Endothelial cell of umbilical vein (primary cell): ENCODE measurements at regions of chr4 and their contacts with region 1.

Region 1: DNA sequence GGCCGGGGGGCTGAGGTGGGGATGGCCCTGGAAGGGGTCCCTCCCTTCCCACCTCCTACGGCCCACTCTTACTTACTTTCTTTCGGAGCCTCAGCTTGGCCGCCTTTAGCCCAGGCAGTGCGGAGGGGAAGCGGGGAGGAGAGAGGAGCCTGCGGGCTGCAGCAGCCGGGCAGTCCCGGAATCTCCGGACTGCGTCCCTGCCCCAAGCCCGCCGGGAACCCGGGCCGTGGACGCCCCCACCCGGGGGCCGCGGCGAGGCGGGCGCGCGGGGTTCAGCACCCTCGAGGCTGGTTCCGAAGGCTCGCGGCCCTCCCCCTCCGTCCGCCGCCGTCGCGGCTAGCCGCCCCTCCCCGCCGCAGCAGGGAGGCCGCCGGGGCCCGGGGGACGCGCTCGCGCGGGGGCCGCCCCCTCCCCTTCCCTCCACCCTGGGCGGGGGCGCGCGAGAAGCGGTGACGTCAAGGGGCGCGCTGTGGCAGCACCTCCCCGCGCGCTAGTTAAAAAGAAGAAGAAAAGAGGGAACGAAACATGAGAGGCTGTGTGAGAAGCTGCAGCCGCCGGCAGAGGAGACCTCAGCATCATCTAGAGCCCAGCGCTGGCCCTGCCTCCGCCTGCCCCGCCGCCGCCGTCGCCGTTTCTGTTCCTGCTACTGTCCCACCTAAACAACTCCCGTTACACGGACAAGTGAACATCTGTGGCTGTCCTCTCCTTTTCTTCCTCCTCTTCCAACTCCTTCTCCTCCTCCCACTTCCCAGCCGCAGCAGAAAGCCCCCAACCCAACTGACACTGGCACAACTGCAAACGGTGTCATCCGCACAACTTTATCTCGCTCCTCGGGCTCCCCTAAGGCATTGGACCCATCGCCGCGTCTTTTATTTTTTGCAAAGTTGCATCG is at the start of gene HHIP:
- DNase-seq: peak; percentile 88
- H3K4me3 ChIP-seq: peak within 1 kb of the TSS; percentile 62 to 100 (median 100)
- H3K27ac ChIP-seq: peak within 1 kb of the TSS; percentile 95
- H3K4me1 ChIP-seq: peaks cover 32% of the 10 kb centered on the region
- H3K27me3 ChIP-seq: no peaks in the 10 kb centered on the region
- CTCF ChIP-seq: no peak
- POLR2A ChIP-seq: peak; percentile 98
- total RNA-seq, gene HHIP: 971 and 1,052 TPM in 2 replicates

Region 2: GRCh38 chr4:144174401-144175067 is 471.3 kb before region 1 on chr4:
- CTCF ChIA-PET with region 1: interaction called, 5 read pairs
- POLR2A ChIA-PET with region 1: no interaction called
- dilution Hi-C with region 1: no loop called
- intact Hi-C with region 1: loop called (anchors 1 kb)
- DNase-seq: peak; percentile 77
- H3K4me3 ChIP-seq: no peak overlapping the region
- H3K27ac ChIP-seq: no peak overlapping the region
- H3K4me1 ChIP-seq: peaks cover 15% of the 10 kb centered on the region
- H3K27me3 ChIP-seq: no peaks in the 10 kb centered on the region
- CTCF ChIP-seq: peak; percentile 8 to 12
- POLR2A ChIP-seq: no peak

Region 3: GRCh38 chr4:144288011-144288903 is 357.6 kb before region 1 on chr4:
- CTCF ChIA-PET with region 1: no interaction called
- POLR2A ChIA-PET with region 1: no interaction called
- dilution Hi-C with region 1: no loop called
- intact Hi-C with region 1: no loop called
- DNase-seq: no peak
- H3K4me3 ChIP-seq: no peak overlapping the region
- H3K27ac ChIP-seq: no peak overlapping the region
- H3K4me1 ChIP-seq: peaks cover 17% of the 10 kb centered on the region
- H3K27me3 ChIP-seq: no peaks in the 10 kb centered on the region
- CTCF ChIP-seq: no peak
- POLR2A ChIP-seq: no peak

Region 4: GRCh38 chr4:144480068-144480467 is 165.8 kb before region 1 on chr4:
- CTCF ChIA-PET with region 1: no interaction called
- POLR2A ChIA-PET with region 1: no interaction called
- dilution Hi-C with region 1: no loop called
- intact Hi-C with region 1: no loop called
- DNase-seq: no peak
- H3K4me3 ChIP-seq: no peak overlapping the region
- H3K27ac ChIP-seq: no peak overlapping the region
- H3K4me1 ChIP-seq: no peaks in the 10 kb centered on the region
- H3K27me3 ChIP-seq: no peaks in the 10 kb centered on the region
- CTCF ChIP-seq: no peak
- POLR2A ChIP-seq: no peak

Region 5: DNA sequence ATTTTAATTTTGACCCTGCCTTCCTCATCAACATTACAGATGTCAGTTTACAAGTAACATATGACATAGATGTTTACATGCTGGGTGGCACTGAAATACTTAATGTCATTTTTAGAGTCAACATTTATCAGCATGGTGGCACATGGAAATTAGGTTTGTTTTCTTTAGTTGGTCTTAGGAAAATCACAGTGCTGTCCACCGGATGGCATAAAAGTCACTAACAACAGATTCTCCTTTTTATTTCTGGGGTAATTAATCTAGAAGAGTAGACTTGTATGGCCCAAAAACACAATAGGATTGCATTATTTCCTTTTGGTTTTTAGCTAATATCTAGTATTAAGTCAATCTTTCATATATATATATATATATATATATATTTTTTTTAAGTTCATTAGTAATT is 88.5 kb before region 1 on chr4:
- CTCF ChIA-PET with region 1: interaction called, 3 read pairs
- POLR2A ChIA-PET with region 1: no interaction called
- dilution Hi-C with region 1: no loop called
- intact Hi-C with region 1: loop called (anchors 2 kb)
- DNase-seq: peak; percentile 47
- H3K4me3 ChIP-seq: no peak overlapping the region
- H3K27ac ChIP-seq: no peak overlapping the region
- H3K4me1 ChIP-seq: peaks cover 4% of the 10 kb centered on the region
- H3K27me3 ChIP-seq: no peaks in the 10 kb centered on the region
- CTCF ChIP-seq: no peak
- POLR2A ChIP-seq: no peak

Region 6: GRCh38 chr4:144591401-144591800 is 54.5 kb before region 1 on chr4:
- CTCF ChIA-PET with region 1: no interaction called
- POLR2A ChIA-PET with region 1: interaction called, 10 read pairs
- dilution Hi-C with region 1: no loop called
- intact Hi-C with region 1: no loop called
- DNase-seq: peak; percentile 86
- H3K4me3 ChIP-seq: no peak overlapping the region
- H3K27ac ChIP-seq: peak overlapping the region; percentile 59
- H3K4me1 ChIP-seq: peaks cover 39% of the 10 kb centered on the region
- H3K27me3 ChIP-seq: no peaks in the 10 kb centered on the region
- CTCF ChIP-seq: no peak
- POLR2A ChIP-seq: no peak

Region 7: DNA sequence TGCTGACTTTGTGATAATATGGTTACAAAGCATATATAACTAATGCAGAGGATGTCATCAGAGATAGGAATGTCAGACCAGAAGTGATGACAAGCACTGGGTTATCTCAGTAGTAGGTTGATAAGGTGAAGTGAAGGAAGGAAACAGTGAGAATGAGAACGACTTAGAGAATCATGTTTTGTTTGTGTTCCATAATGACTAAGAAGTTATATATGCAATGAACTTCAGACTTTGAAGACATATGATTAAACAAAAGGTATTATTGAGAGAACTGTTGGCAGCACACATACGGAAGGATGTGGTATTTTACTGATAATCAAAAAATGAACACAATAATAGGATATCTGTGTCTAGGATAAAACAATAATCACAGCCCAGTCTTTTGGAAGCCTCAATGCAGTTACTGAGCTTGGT is 18.2 kb before region 1 on chr4:
- CTCF ChIA-PET with region 1: interaction called, 9 read pairs
- POLR2A ChIA-PET with region 1: interaction called, 12 read pairs
- dilution Hi-C with region 1: no loop called
- intact Hi-C with region 1: loop called (anchors 1 kb)
- DNase-seq: peak; percentile 96
- H3K4me3 ChIP-seq: no peak overlapping the region
- H3K27ac ChIP-seq: peak overlapping the region; percentile 99
- H3K4me1 ChIP-seq: peaks cover 36% of the 10 kb centered on the region
- H3K27me3 ChIP-seq: no peaks in the 10 kb centered on the region
- CTCF ChIP-seq: no peak
- POLR2A ChIP-seq: peak; percentile 83

Region 8: GRCh38 chr4:144709793-144710525 is 64.1 kb after region 1 on chr4:
- CTCF ChIA-PET with region 1: interaction called, 3 read pairs
- POLR2A ChIA-PET with region 1: no interaction called
- dilution Hi-C with region 1: no loop called
- intact Hi-C with region 1: loop called (anchors 2 kb)
- DNase-seq: peak; percentile 89
- H3K4me3 ChIP-seq: no peak overlapping the region
- H3K27ac ChIP-seq: peak overlapping the region; percentile 91
- H3K4me1 ChIP-seq: peaks cover 66% of the 10 kb centered on the region
- H3K27me3 ChIP-seq: no peaks in the 10 kb centered on the region
- CTCF ChIP-seq: no peak
- POLR2A ChIP-seq: peak; percentile 41

Region 9: DNA sequence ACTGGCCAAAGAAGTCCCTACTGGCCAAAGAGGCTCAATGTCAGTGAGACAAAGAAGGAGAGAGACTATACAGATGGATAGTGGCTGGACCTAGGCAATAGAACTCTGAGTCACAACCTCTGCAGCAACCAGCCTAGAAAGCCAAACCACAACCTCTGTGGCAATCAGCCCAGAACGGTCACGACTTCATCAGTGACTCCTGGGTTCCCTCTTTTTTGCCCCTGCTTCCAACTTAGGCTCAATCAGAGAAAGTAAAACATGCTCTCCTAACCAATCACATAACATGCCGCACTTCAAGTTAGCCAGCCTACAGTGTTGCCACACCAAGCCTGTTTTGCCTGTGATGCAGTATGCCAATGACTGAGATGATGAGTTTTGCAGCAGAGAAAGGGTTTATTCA is 248.7 kb after region 1 on chr4:
- CTCF ChIA-PET with region 1: no interaction called
- POLR2A ChIA-PET with region 1: no interaction called
- dilution Hi-C with region 1: no loop called
- intact Hi-C with region 1: no loop called
- DNase-seq: no peak
- H3K4me3 ChIP-seq: no peak overlapping the region
- H3K27ac ChIP-seq: no peak overlapping the region
- H3K4me1 ChIP-seq: no peaks in the 10 kb centered on the region
- H3K27me3 ChIP-seq: no peaks in the 10 kb centered on the region
- CTCF ChIP-seq: no peak
- POLR2A ChIP-seq: no peak

Region 10: GRCh38 chr4:145097821-145098674 is 452.2 kb after region 1 on chr4 and contains the starts of genes ABCE1 and ANAPC10:
- CTCF ChIA-PET with region 1: interaction called, 3 read pairs
- POLR2A ChIA-PET with region 1: no interaction called
- dilution Hi-C with region 1: no loop called
- intact Hi-C with region 1: loop called (anchors 5 kb)
- DNase-seq: peak; percentile 98
- H3K4me3 ChIP-seq: peak within 1 kb of the TSS; percentile 45 to 95 (median 66)
- H3K27ac ChIP-seq: peak within 1 kb of the TSS; percentile 74
- H3K4me1 ChIP-seq: peaks cover 35% of the 10 kb centered on the region
- H3K27me3 ChIP-seq: no peaks in the 10 kb centered on the region
- CTCF ChIP-seq: peak in 1 of 2 donors; percentile 11
- POLR2A ChIP-seq: peak; percentile 82
- total RNA-seq, gene ABCE1: 107 and 114 TPM in 2 replicates
- total RNA-seq, gene ANAPC10: 21.4 and 24.0 TPM in 2 replicates

Region 11: DNA sequence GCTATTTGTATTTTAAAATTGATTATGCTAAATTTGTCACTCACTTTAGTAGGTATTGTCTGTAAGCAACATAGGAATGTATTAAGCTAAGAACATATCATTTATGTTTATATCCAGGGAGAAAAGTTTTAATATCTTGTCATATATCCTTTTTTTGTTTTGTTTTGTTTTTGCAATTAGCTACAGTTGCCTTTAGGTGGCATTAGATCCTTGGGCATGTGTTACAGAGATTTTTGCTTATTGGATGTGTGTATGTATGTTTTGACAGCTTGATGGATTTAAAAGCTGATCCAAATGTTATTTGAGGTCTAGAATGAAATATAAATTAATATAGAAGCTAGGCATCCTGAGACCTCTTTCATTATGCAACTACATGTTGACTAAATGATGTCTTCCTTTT is 570.7 kb after region 1 on chr4:
- CTCF ChIA-PET with region 1: no interaction called
- POLR2A ChIA-PET with region 1: no interaction called
- dilution Hi-C with region 1: no loop called
- intact Hi-C with region 1: no loop called
- DNase-seq: peak; percentile 64
- H3K4me3 ChIP-seq: no peak overlapping the region
- H3K27ac ChIP-seq: no peak overlapping the region
- H3K4me1 ChIP-seq: peaks cover 4% of the 10 kb centered on the region
- H3K27me3 ChIP-seq: peaks cover 4 to 5% of the 10 kb centered on the region in 2 experiments
- CTCF ChIP-seq: peak; percentile 28 to 34
- POLR2A ChIP-seq: no peak